SK-N-SH (cell line): ENCODE measurements at regions of chr10 and their contacts with region 1.

Region 1: DNA sequence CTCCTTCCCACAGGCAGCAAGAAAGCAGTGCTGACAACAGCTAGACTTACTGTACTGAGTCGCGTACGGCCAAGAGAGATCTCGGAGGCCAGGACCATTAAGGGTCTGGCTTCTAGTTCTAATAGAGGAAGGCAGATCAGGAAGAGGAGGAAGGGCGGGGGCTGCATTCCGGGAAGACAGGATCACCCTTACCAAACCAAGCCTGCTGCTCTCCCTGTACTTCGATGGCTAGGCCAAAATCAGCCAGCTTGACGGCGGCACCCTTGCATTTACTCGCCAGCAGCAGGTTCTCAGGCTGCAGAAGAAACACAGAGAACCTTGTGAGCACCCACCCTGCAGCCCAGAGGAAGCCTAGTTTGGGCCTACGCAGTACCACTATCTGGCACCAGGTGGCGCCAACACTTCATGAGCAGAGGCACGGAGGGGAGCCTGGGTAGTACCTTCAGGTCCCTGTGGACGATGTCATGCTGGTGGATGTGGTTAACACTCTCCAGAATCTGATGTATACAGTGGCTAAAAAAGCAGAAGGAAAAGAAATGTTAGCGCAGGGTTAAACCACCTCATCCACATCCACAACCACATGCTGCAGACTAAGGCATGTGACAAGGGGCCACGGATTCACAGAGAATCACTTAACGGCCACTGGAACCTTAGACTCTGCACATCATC is 25.4 kb downstream of the CAMK2G start:
- DNase-seq: peak; percentile 91
- H3K4me3 ChIP-seq: peak overlapping the region in 1 of 2 experiments; percentile 6; a peak in 1 of 4 replicates
- H3K27ac ChIP-seq: no peak overlapping the region
- H3K4me1 ChIP-seq: peaks cover 0 to 11% of the 10 kb centered on the region in 2 experiments; a peak in 1 of 4 replicates
- H3K27me3 ChIP-seq: no peaks in the 10 kb centered on the region
- CTCF ChIP-seq: peak; percentile 99
- EP300 ChIP-seq: no peak
- RAD21 ChIP-seq: peak; percentile 97

Region 2: DNA sequence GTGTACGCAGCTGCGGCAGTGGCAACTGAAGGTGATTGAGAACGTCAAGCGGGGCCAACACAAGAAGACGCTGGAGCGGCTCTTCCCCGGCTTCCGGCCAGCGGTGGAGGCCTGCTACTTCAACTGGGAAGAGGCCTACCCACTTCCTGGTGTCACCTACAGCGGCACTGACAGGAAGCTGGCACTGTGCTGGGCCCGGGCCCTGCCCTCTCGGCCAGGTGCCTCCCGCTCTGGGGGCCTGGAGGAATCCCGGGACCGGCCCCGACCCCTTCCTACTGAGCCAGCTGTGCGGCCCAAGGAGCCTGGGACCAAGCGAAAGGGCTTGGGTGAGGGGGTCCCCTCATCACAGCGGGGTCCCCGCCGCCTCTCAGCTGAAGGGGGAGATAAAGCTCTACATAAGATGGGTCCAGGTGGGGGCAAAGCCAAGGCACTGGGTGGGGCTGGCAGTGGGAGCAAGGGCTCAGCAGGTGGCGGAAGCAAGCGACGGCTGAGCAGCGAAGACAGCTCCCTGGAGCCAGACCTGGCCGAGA is 57.0 kb before region 1 on chr10:
- CTCF ChIA-PET with region 1: no interaction called
- POLR2A ChIA-PET with region 1: no interaction called
- DNase-seq: no peak
- H3K4me3 ChIP-seq: no peak overlapping the region
- H3K27ac ChIP-seq: no peak overlapping the region
- H3K4me1 ChIP-seq: peaks cover 0 to 7% of the 10 kb centered on the region in 2 experiments; a peak in 1 of 4 replicates
- H3K27me3 ChIP-seq: no peaks in the 10 kb centered on the region
- CTCF ChIP-seq: no peak
- EP300 ChIP-seq: no peak
- RAD21 ChIP-seq: no peak

Region 3: DNA sequence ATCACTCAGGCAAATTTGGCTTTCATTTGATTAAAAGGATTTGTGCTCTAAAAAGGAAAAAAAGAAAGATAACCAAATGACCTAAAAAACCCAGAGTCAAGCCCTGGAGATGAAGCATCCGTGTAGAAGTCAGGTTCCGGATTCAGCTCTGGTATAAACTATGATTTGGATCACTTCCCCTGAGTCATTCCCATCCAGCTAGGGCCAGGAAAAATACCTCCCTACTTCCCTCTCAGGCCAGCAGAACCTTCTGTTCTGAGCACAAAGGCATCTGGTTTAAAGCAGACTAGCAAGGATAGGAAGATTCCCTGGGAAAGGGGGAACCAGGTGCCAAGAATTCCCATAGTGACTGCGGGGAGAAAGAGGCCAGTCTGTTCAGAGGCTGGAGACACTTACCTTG is 11.9 kb before region 1 on chr10:
- CTCF ChIA-PET with region 1: interaction called, 34 read pairs
- POLR2A ChIA-PET with region 1: interaction called, 3 read pairs
- DNase-seq: no peak
- H3K4me3 ChIP-seq: no peak overlapping the region
- H3K27ac ChIP-seq: peak overlapping the region in 1 of 2 experiments; percentile 56; a peak in 2 of 4 replicates
- H3K4me1 ChIP-seq: no peaks in the 10 kb centered on the region; a peak in 1 of 4 replicates
- H3K27me3 ChIP-seq: no peaks in the 10 kb centered on the region
- CTCF ChIP-seq: no peak
- EP300 ChIP-seq: no peak
- RAD21 ChIP-seq: no peak